Right cardiac atrium (tissue), 5 donors: ENCODE measurements at regions of chr16 and their contacts with region 1.

Region 1: GRCh38 chr16:83967806-83968305 is at the start of gene NECAB2:
- DNase-seq: peak; percentile 65 to 88 (median 85)
- ATAC-seq: peak; percentile 50 to 67
- H3K4me3 ChIP-seq: peak within 1 kb of the TSS; percentile 78
- H3K27ac ChIP-seq: no peak within 1 kb of the TSS
- H3K4me1 ChIP-seq: no peaks in the 10 kb centered on the region
- H3K27me3 ChIP-seq: no peaks in the 10 kb centered on the region
- total RNA-seq, gene NECAB2: 0.28 to 1.8 (median 1.4) TPM

Region 2: DNA sequence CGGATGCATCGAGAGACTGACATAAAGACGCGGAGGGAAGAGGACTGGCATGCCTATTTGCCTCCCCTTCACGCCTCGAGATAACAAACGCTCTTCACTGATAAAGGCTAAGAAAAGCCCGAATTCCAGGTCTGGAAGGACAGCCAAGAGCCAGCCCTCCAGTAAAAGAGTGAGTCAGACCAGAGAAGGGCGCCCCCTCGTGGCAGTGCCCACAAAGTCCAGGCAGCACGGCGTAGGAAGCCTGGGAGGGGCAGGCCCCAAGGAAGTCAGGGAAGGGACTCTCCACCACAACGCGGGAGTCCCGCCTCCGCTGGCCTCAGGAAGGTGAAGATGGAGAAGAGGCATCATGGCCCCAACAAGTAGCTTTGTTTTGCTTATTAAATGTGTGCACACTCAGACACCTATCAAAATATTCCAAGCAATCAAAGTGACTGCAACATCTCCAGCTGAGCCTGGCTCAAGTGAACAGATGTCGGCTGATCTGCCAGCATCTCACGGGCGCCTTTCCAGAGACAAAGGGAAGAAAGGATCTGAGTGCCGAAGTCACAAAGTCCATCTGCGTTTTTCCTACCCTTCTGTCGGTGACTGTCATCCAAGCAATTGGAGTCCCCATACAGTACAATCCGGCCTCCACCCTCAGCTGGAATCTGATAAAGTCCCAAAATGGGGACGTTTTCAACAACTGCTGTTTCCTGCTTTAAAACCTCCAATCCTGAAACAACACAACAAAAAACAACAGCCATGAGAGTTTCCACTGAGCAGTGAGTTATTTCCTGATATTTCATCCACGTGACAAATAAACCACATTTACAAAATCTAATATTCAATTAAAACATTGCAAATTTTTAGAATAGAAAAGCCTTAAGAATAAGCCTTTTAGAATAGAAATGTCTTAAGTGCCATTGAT is 95.1 kb after region 1 on chr16:
- intact Hi-C with region 1: loop called in 3 of 4 experiments (anchors 5 kb)
- DNase-seq: peak; percentile 85 to 92 (median 92)
- ATAC-seq: peak; percentile 91 to 93
- H3K4me3 ChIP-seq: no peak overlapping the region
- H3K27ac ChIP-seq: peak overlapping the region; percentile 28
- H3K4me1 ChIP-seq: peaks cover 2% of the 10 kb centered on the region
- H3K27me3 ChIP-seq: no peaks in the 10 kb centered on the region

Region 3: GRCh38 chr16:84084570-84085270 is 116.9 kb after region 1 on chr16:
- intact Hi-C with region 1: no loop called
- DNase-seq: peak in 2 of 3 donors; percentile 52 to 78
- ATAC-seq: peak in 1 of 2 donors; percentile 24
- H3K4me3 ChIP-seq: no peak overlapping the region
- H3K27ac ChIP-seq: no peak overlapping the region
- H3K4me1 ChIP-seq: peaks cover 4% of the 10 kb centered on the region
- H3K27me3 ChIP-seq: no peaks in the 10 kb centered on the region

Region 4: GRCh38 chr16:84175350-84176081 is 207.7 kb after region 1 on chr16:
- intact Hi-C with region 1: loop called in 2 of 4 experiments (anchors 5 to 10 kb)
- DNase-seq: peak; percentile 58 to 75 (median 70)
- ATAC-seq: peak; percentile 59 to 71
- H3K4me3 ChIP-seq: no peak overlapping the region
- H3K27ac ChIP-seq: peak overlapping the region; percentile 55
- H3K4me1 ChIP-seq: peaks cover 7% of the 10 kb centered on the region
- H3K27me3 ChIP-seq: no peaks in the 10 kb centered on the region

Region 5: GRCh38 chr16:84186685-84187437 is 219.0 kb after region 1 on chr16 and contains the start of gene TAF1C:
- intact Hi-C with region 1: loop called in 1 of 4 experiments (anchors 5 kb)
- DNase-seq: peak; percentile 94 to 98 (median 97)
- ATAC-seq: peak; percentile 93 to 96
- H3K4me3 ChIP-seq: peak within 1 kb of the TSS; percentile 68
- H3K27ac ChIP-seq: peak within 1 kb of the TSS; percentile 82
- H3K4me1 ChIP-seq: peaks cover 2% of the 10 kb centered on the region
- H3K27me3 ChIP-seq: no peaks in the 10 kb centered on the region
- total RNA-seq, gene TAF1C: 26.0 to 31.1 (median 28.4) TPM

Region 6: DNA sequence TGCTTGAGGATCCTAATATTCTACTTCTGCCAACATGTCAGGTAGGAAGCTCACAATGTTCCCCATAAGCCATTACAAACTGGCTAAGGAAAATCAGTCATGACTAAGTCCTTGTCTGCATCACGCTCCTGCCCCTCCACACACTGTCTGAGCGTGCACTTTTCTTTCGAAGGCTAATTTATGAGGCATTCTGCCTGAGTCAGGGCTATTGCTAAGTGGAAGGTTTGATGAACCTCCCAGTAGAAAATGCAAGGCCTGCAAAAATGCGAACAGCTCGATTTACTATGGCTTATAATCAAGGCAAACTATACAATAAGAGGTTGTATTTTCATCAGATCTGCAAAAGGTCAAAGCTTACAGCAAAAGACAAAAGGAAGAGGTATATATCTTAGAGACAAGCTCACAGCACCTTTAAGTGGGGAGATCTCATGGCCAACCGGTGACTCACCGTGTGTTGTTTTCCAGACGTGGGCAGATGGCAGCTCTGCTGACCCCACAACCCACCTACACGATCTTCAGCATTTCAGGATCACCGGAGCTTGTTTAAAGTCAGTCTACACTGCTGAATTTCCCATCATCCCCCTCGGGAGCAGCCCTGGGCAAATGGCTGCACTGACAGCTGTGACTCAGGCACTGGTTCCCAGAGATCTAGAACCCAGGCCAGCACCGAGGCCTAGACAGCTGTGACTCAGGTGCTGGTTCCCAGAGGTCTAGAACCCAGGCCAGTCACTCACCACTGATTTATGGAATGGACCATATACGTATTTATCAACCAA is 510.5 kb after region 1 on chr16:
- intact Hi-C with region 1: loop called in 1 of 4 experiments (anchors 10 kb)
- DNase-seq: no peak
- ATAC-seq: no peak
- H3K4me3 ChIP-seq: no peak overlapping the region
- H3K27ac ChIP-seq: no peak overlapping the region
- H3K4me1 ChIP-seq: no peaks in the 10 kb centered on the region
- H3K27me3 ChIP-seq: no peaks in the 10 kb centered on the region